PC-3 (cell line): ENCODE measurements at regions of chr10 and their contacts with region 1.

Region 1: DNA sequence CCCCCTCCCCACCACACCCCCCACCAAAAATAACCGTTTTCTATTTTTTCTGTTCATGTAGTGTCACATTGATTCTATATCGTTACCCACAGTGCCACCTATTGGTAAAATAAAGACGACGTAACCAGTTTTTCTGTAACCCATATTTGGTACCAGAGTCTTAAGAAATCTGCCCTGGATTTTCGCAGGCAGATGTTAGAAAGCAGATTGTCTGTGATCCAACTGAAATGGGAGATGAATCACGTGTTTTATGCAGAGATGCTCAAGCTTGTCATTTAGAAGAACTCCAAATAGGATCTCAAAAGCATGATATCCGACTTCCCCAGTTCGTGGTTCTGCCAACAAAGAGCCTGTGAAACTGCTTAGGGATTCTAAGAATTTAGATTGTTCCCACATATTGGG is 261.1 kb upstream of the CSTF2T start:
- DNase-seq: peak; percentile 89
- ATAC-seq: peak; percentile 56
- H3K4me3 ChIP-seq: no peak overlapping the region
- H3K27ac ChIP-seq: no peak overlapping the region
- H3K4me1 ChIP-seq: peaks cover 16% of the 10 kb centered on the region
- H3K27me3 ChIP-seq: peaks cover 8% of the 10 kb centered on the region
- CTCF ChIP-seq: peak; percentile 94

Region 2: DNA sequence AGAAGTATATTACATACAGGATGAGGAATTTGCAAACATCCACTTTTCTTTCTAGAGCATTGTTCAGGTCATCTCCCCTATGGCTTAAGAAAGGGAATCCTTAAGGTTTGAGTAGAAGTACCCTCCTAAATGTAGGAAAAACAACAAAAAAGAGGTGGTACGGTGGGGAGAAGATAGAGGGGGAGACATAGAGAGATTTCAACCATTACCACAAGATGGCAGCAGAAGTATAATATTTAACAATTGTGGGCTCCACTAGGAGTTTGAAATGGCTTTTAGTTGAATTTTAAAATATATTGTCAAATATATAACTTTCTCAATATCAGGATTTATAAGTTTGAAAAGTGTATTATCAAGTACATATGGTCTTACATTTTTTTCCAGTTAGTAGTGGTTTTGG is 958.9 kb before region 1 on chr10:
- CTCF ChIA-PET with region 1: no interaction called
- POLR2A ChIA-PET with region 1: no interaction called
- intact Hi-C with region 1: loop called (anchors 2 kb)
- DNase-seq: peak; percentile 85
- ATAC-seq: peak; percentile 87
- H3K4me3 ChIP-seq: no peak overlapping the region
- H3K27ac ChIP-seq: no peak overlapping the region
- H3K4me1 ChIP-seq: no peaks in the 10 kb centered on the region
- H3K27me3 ChIP-seq: peaks cover 73% of the 10 kb centered on the region
- CTCF ChIP-seq: peak; percentile 99

Region 3: DNA sequence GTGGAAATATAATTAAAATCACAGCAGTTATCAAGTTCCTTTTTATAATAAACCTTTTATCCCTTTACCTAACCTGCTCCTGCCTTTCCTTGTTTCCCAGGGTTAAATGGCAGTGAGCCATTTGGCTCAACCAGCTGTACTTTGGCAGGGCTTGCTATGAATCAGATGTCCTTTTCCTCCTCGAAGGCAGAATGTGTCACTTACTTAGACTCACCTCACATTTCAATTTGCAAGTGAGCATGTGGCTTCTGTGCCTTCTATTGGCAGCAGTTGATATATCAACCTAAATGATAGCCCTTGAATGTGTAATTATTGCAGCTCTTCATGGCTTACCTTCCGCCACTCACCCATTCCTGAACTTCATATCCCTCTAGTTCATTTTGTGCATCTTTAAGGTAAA is 562.8 kb before region 1 on chr10:
- CTCF ChIA-PET with region 1: no interaction called
- POLR2A ChIA-PET with region 1: no interaction called
- intact Hi-C with region 1: loop called (anchors 2 kb)
- DNase-seq: peak; percentile 100
- ATAC-seq: peak; percentile 99
- H3K4me3 ChIP-seq: no peak overlapping the region
- H3K27ac ChIP-seq: peak overlapping the region; percentile 50
- H3K4me1 ChIP-seq: peaks cover 14% of the 10 kb centered on the region
- H3K27me3 ChIP-seq: no peaks in the 10 kb centered on the region
- CTCF ChIP-seq: peak; percentile 83

Region 4: GRCh38 chr10:51547941-51548340 is 412.6 kb before region 1 on chr10:
- CTCF ChIA-PET with region 1: no interaction called
- POLR2A ChIA-PET with region 1: no interaction called
- intact Hi-C with region 1: loop called (anchors 10 kb)
- DNase-seq: no peak
- ATAC-seq: no peak
- H3K4me3 ChIP-seq: no peak overlapping the region
- H3K27ac ChIP-seq: no peak overlapping the region
- H3K4me1 ChIP-seq: peaks cover 8% of the 10 kb centered on the region
- H3K27me3 ChIP-seq: no peaks in the 10 kb centered on the region
- CTCF ChIP-seq: no peak

Region 5: DNA sequence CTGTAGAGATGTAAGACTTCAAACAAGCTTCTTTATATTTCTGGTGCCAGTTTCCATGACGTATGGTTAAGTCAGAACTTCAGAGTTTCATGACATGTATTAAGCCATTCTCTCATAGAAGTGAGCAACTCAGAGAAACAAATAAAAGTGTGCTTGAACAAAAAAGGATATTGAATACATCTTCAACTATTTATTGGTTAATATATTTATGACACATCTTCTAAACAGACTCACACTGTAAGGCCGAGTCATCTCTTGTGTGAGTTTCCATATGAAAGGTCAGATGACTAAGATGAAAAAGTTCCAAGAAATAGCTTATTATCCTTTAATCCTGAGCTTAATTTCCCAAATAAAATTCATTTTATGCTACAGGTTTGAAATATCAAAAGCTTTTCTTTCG is 155.6 kb before region 1 on chr10:
- CTCF ChIA-PET with region 1: interaction called, 4 read pairs
- POLR2A ChIA-PET with region 1: no interaction called
- intact Hi-C with region 1: loop called (anchors 10 kb)
- DNase-seq: peak; percentile 96
- ATAC-seq: peak; percentile 89
- H3K4me3 ChIP-seq: no peak overlapping the region
- H3K27ac ChIP-seq: peak overlapping the region; percentile 79
- H3K4me1 ChIP-seq: peaks cover 31% of the 10 kb centered on the region
- H3K27me3 ChIP-seq: no peaks in the 10 kb centered on the region
- CTCF ChIP-seq: no peak

Region 6: GRCh38 chr10:52056296-52056695 is 95.8 kb after region 1 on chr10:
- CTCF ChIA-PET with region 1: no interaction called
- POLR2A ChIA-PET with region 1: interaction called, 3 read pairs
- intact Hi-C with region 1: loop called (anchors 1 kb)
- DNase-seq: peak; percentile 98
- ATAC-seq: peak; percentile 82
- H3K4me3 ChIP-seq: no peak overlapping the region
- H3K27ac ChIP-seq: no peak overlapping the region
- H3K4me1 ChIP-seq: peaks cover 19% of the 10 kb centered on the region
- H3K27me3 ChIP-seq: no peaks in the 10 kb centered on the region
- CTCF ChIP-seq: no peak